Calu3 (cell line): ENCODE measurements at regions of chr14 and their contacts with region 1.

Region 1: DNA sequence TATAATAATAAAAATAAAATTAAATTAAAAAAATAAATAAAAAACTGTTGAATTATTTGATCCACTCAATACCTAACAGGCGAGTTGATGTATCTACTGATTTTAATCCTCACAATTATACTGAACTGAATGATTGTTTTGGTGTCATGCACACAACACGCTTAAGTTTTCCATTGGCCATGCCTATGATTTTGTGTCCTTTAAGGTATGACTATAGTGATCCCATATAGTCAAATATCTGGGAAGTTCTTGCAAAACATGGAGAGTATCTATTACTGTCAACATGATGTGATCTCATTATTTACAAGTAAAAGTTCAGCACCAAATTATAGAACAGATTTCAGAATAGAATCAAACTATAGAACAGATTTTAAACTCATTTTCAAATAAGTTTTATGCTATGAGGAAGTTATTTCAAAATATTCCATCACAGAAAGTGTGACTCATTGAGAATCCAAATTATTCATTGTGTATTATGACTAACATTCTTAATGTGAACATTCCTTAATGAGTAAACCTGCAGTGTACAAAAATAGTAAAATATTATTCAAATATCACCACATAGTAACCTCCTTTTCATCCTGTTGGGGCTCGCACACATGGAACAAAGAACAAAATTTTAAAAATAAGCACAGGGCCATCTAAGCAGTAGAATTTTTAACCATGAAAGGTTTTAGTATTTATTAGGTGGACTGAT is 190.4 kb downstream of the SLC25A21 start:
- DNase-seq: peak; percentile 13
- H3K4me3 Mint-ChIP-seq: no peak overlapping the region
- H3K27ac Mint-ChIP-seq: peak overlapping the region; percentile 62
- H3K4me1 Mint-ChIP-seq: peaks cover 31% of the 10 kb centered on the region
- H3K27me3 Mint-ChIP-seq: no peaks in the 10 kb centered on the region
- CTCF ChIP-seq: no peak

Region 2: DNA sequence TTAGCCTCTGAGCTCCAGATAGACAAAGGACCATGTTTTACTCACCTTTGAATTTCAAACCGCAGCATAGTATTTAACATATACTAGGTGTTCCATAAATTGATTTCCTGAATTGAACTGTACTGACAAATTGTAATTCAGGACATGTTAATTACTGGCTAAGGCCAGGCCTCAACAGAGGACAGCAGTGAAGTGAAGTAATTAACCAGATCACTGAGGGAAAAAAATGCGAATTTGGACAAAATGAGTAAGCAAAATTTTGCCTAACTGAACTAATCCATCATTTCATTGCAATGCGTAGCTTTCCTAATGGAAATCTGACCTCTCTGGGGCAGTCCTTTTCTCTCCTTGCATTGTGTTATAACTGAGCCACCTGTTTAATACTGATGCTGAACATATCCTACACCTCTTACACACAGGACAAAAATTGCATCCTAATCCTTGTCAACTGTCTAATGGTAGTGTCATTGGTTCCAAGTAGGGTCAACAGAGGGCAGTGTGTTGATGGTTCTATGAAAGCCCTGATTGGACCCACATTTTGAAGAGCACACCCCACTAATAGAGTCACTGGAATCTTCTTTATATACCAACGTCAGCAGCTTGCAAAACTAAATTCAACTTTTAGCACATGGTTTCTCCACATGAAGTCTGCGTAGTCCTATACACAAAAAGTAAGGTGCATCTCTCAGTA is 42.0 kb after region 1 on chr14:
- CTCF ChIA-PET with region 1: no interaction called
- intact Hi-C with region 1: no loop called
- DNase-seq: no peak
- H3K4me3 Mint-ChIP-seq: no peak overlapping the region
- H3K27ac Mint-ChIP-seq: no peak overlapping the region
- H3K4me1 Mint-ChIP-seq: no peaks in the 10 kb centered on the region
- H3K27me3 Mint-ChIP-seq: no peaks in the 10 kb centered on the region
- CTCF ChIP-seq: no peak

Region 3: DNA sequence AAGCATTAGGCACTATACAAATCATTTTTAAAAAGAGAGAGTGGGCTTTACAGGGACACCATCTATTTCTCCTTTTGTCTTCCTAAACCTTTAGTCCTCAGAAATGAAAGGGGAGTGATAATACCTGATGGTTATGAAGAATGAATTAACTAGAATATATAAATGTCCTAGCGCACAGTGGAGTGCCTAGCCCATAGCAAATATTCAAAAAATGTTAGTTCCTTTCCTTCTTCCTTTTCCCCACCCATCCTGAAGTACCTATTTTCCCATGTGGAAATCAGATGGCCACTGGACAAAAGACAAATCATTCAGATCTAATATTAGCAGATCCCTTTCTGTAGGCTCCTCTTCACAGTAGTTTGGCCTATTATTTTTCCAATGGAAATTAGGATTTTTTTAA is 100.5 kb after region 1 on chr14:
- CTCF ChIA-PET with region 1: no interaction called
- intact Hi-C with region 1: loop called (anchors 1 kb)
- DNase-seq: no peak
- H3K4me3 Mint-ChIP-seq: no peak overlapping the region
- H3K27ac Mint-ChIP-seq: peak overlapping the region; percentile 62
- H3K4me1 Mint-ChIP-seq: peaks cover 29% of the 10 kb centered on the region
- H3K27me3 Mint-ChIP-seq: no peaks in the 10 kb centered on the region
- CTCF ChIP-seq: no peak